K562 (cell line): ENCODE measurements at regions of chr13 and their contacts with region 1.

Region 1: DNA sequence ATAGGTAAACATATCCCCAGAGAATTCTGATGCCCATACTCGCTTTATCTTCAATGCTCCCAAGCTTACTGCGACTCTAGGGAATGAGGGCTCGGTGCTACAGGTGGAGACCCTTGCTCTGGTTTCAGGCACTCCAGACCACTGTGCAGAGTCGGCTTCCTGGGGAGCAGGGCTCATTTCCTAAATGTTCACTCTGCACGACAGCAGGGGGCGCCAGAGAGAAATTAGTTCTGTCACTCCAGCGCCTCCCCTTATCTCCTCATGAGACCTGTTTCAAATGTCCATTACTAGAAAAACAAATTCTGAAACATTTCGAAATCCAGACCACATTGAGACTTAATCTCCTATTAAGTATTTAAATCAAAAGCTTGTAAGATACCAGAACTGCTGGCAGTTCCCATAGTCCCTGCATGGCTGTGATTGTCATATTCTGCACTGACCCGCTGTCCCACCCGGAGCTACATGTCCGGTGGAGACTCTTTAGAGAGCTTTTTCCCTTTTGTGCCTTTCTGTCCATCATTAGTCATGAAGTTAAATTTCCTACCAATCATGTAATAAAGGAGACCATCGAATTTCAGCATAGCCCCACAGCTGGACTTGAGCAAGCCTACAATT is 22.4 kb downstream of the EPSTI1 start:
- DNase-seq: peak; percentile 63 to 69 (median 65)
- ATAC-seq: peak; percentile 95
- H3K4me3 ChIP-seq: no peak overlapping the region
- H3K27ac ChIP-seq: no peak overlapping the region
- H3K4me1 ChIP-seq: no peaks in the 10 kb centered on the region
- H3K27me3 ChIP-seq: no peaks in the 10 kb centered on the region
- CTCF ChIP-seq: peak; percentile 64 to 77 (median 70)
- EP300 ChIP-seq: no peak
- POLR2A ChIP-seq: no peak
- RAD21 ChIP-seq: peak; percentile 19 to 51; a peak in 2 of 4 replicates

Region 2: DNA sequence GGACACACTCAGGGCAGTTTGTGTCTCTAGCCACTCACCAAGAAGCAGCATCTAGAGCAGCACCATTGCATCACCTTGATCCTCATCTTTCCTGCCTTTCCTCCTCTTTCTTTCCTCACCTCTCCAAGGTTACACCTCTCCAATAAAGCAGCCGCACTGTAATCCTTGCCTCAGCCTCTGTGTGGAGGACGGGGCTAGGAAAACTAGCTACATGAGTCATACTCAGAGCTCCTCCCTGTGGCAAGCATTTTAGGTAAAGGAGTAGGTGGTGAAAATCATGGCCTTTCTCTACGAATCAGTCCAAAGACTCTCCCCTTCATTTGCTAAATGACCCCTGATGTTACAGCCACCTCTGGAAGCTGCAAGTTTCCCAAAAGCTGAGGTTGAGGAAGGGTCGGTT is 162.6 kb after region 1 on chr13:
- CTCF ChIA-PET with region 1: no interaction called
- POLR2A ChIA-PET with region 1: no interaction called
- in situ Hi-C with region 1: no loop called
- intact Hi-C with region 1: loop called (anchors 2 kb)
- DNase-seq: peak in 2 of 4 experiments; percentile 4 to 5
- ATAC-seq: peak; percentile 61
- H3K4me3 ChIP-seq: no peak overlapping the region
- H3K27ac ChIP-seq: no peak overlapping the region
- H3K4me1 ChIP-seq: no peaks in the 10 kb centered on the region
- H3K27me3 ChIP-seq: no peaks in the 10 kb centered on the region; a peak in 1 of 5 replicates
- CTCF ChIP-seq: peak in 2 of 3 experiments; percentile 35 to 40; a peak in 4 of 6 replicates
- EP300 ChIP-seq: no peak
- POLR2A ChIP-seq: no peak
- RAD21 ChIP-seq: peak in 1 of 2 experiments; percentile 48; a peak in 2 of 4 replicates

Region 3: DNA sequence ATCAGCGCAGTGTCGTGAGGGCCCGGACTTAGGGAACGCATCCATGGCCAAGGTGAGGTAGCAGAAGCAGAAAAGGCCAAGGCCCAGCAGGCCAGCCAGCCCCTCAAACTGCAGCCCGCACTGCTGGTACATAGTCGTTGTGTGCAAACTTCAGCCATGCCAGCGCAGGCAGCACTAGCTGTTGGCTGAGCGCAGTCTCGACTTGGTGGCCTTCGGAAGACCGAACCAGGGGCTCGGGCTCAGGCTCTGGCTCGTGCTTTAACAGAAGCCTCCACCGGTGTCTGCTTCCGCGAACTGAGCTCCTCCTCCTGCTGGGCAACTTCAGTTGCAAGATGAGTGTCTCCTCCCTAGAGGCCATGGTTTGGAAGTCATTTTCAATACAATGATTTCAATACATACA is 211.2 kb after region 1 on chr13:
- CTCF ChIA-PET with region 1: no interaction called
- POLR2A ChIA-PET with region 1: no interaction called
- in situ Hi-C with region 1: no loop called
- intact Hi-C with region 1: no loop called
- DNase-seq: no peak
- ATAC-seq: no peak
- H3K4me3 ChIP-seq: no peak overlapping the region
- H3K27ac ChIP-seq: no peak overlapping the region
- H3K4me1 ChIP-seq: no peaks in the 10 kb centered on the region
- H3K27me3 ChIP-seq: no peaks in the 10 kb centered on the region
- CTCF ChIP-seq: no peak
- EP300 ChIP-seq: no peak
- POLR2A ChIP-seq: no peak
- RAD21 ChIP-seq: no peak